Posterior vena cava (tissue), 2 donors: ENCODE measurements at regions of chr13 and their contacts with region 1.

Region 1: GRCh38 chr13:60427285-60427684 is 30.3 kb downstream of the TDRD3 start:
- DNase-seq: no peak

Region 2: DNA sequence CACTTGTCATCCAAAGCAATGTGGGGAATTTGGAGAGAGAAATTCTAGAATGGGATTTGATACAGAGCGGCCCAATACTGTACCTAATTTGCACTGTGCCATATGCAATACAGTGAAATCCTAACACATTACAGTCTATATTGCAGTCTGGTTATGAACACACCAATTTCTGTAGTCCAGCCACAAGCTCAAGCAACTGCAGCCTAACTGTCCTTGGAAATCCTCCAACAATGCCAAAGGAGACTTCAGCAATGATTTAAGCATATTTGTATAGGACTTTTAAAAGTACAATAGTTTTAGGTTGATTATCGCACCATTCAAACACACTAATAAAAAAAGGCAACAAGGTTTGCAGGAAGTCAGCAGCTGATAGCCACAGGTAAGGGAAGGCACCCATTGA is 280.8 kb before region 1 on chr13:
- intact Hi-C with region 1: no loop called
- DNase-seq: no peak

Region 3: DNA sequence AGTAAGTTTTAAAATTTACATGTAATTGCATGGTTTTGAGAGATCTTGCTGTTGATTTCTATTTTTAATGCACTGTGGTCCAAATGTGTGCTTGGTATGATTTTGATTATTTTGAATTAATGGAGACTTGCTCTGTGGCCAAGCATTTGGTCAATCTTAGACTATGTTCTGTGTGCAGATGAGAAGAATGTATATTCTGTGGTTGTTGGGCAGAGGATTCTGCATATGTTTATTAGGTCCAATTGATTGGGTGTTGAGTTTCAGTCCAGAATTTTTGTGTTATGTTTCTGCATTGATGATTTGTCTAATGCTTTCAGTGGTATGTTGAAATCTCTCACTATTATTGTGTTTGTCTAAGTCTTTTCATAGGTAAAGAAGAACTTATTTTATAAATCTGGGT is 52.0 kb after region 1 on chr13:
- intact Hi-C with region 1: loop called in 1 of 2 experiments (anchors 2 kb)
- DNase-seq: no peak